Activated naive CD4-positive, alpha-beta T cell treated with anti-CD3 and anti-CD28 coated beads for 36 hours (primary cell): ENCODE measurements at regions of chrX and their contacts with region 1.

Region 1: GRCh38 chrX:135477576-135477975 is 42.9 kb upstream of the INTS6L start:
- DNase-seq: peak; percentile 63
- H3K4me3 Mint-ChIP-seq: no peak overlapping the region
- H3K27ac Mint-ChIP-seq: no peak overlapping the region
- H3K4me1 Mint-ChIP-seq: no peaks in the 10 kb centered on the region
- H3K27me3 Mint-ChIP-seq: no peaks in the 10 kb centered on the region

Region 2: GRCh38 chrX:134969726-134970125 is 507.9 kb before region 1 on chrX:
- CTCF ChIA-PET with region 1: no interaction called
- intact Hi-C with region 1: loop called (anchors 1 kb)
- DNase-seq: no peak
- H3K4me3 Mint-ChIP-seq: no peak overlapping the region
- H3K27ac Mint-ChIP-seq: no peak overlapping the region
- H3K4me1 Mint-ChIP-seq: no peaks in the 10 kb centered on the region
- H3K27me3 Mint-ChIP-seq: peaks cover 2% of the 10 kb centered on the region

Region 3: DNA sequence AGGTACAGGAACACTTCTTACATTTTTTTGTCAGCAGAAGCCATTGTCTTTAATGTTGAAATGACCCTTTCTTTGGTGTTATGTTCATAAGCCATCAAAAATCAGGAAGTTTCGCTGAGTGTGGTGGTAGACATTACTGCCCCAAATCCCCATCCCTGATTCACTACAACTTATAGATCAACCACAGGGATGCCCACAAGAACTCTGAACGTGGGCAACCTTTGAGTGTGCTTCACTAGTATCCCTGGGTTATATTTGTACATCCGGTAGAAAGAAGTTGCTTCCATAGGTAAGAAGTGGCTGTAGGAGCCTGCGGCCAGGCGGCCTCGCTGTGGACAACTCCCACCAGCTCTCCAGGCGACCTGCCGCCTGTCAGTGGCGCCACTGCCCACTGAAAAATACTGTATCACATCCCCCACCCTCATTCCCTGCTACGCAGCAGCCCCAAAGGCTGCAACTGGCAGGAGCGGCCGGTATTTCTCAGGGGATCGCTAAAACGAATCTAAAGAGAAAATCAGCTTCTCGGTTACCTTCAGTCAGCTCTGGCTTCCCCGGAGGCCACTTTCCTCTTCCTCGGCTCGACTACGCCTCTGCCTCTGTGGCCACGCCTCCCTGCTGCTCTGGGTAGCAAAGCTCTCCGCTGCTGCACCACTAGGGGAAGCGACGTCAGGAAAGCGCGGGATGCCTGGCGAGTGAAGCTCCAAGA is 182.2 kb before region 1 on chrX:
- CTCF ChIA-PET with region 1: no interaction called
- intact Hi-C with region 1: loop called (anchors 2 kb)
- DNase-seq: peak; percentile 77
- H3K4me3 Mint-ChIP-seq: peak overlapping the region; percentile 85
- H3K27ac Mint-ChIP-seq: peak overlapping the region; percentile 83
- H3K4me1 Mint-ChIP-seq: peaks cover 16% of the 10 kb centered on the region
- H3K27me3 Mint-ChIP-seq: no peaks in the 10 kb centered on the region

Region 4: GRCh38 chrX:135345107-135345589 is 132.4 kb before region 1 on chrX:
- CTCF ChIA-PET with region 1: no interaction called
- intact Hi-C with region 1: loop called (anchors 1 kb)
- DNase-seq: no peak
- H3K4me3 Mint-ChIP-seq: peak overlapping the region; percentile 73
- H3K27ac Mint-ChIP-seq: peak overlapping the region; percentile 68
- H3K4me1 Mint-ChIP-seq: peaks cover 35% of the 10 kb centered on the region
- H3K27me3 Mint-ChIP-seq: no peaks in the 10 kb centered on the region